GM12878 (cell line): ENCODE measurements at regions of chr1 and their contacts with region 1.

Region 1: DNA sequence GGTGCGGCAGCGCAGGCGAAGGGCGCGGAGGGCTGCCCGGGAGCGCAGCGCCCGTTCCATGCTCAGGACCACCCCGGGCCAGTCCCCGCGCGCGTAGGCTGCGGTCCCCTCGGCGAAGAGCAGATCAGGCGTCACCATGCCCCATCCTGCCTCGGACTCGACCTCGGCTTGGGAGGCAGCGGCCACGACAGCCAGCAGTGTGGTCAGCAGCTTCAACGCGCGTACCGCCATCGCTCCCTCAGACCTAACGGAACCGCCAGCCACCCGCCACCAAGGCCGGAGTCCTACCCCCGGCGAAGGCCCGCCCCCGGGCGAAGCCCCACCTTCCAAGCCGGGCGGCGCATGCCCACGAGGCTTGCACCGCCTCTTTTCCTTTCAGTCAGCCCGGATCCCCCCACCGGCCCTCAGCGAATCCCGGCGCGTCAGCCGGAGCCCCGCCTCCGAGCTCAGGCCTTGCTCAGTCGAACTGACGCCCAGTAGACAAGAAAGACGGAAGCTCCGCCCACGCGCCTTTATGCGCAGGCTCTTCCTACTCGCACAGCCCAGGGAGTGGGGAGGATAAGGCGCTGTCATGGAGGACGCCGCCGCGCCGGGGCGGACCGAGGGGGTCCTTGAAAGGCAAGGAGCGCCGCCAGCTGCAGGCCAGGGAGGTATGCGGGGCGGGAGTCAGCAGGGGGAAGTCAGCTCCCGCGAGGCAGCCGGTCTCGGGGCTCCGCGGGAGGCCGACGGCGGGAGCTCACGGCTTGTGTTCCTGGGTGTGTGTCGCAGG is at the starts of genes C1orf50 and P3H1:
- DNase-seq: peak; percentile 93
- ATAC-seq: peak; percentile 93
- H3K4me3 ChIP-seq: peak within 1 kb of the TSS; percentile 95
- H3K27ac ChIP-seq: peak within 1 kb of the TSS; percentile 84
- H3K4me1 ChIP-seq: peaks cover 4% of the 10 kb centered on the region; the same call in 1 of the 2 replicates
- H3K27me3 ChIP-seq: no peaks in the 10 kb centered on the region
- CTCF ChIP-seq: no peak
- EP300 ChIP-seq: no peak
- POLR2A ChIP-seq: peak; percentile 99
- RAD21 ChIP-seq: no peak
- polyA plus RNA-seq, gene C1orf50: 1.2 to 3.3 TPM
- polyA plus RNA-seq, gene P3H1: 0.72 to 3.1 TPM

Region 2: GRCh38 chr1:42777852-42778251 is 10.9 kb after region 1 on chr1:
- CTCF ChIA-PET with region 1: interaction called, 8 read pairs
- POLR2A ChIA-PET with region 1: interaction called, 9 read pairs
- RAD21 ChIA-PET with region 1: interaction called, 25 read pairs
- SMC1A ChIA-PET with region 1: interaction called, 21 read pairs
- in situ Hi-C with region 1: no loop called
- intact Hi-C with region 1: no loop called
- DNase-seq: no peak
- ATAC-seq: peak; percentile 77
- H3K4me3 ChIP-seq: no peak overlapping the region
- H3K27ac ChIP-seq: no peak overlapping the region
- H3K4me1 ChIP-seq: peaks cover 5% of the 10 kb centered on the region; the same call in 1 of the 2 replicates
- H3K27me3 ChIP-seq: no peaks in the 10 kb centered on the region
- CTCF ChIP-seq: peak; percentile 69 to 76 (median 71)
- EP300 ChIP-seq: no peak
- POLR2A ChIP-seq: no peak
- RAD21 ChIP-seq: peak; percentile 85

Region 3: DNA sequence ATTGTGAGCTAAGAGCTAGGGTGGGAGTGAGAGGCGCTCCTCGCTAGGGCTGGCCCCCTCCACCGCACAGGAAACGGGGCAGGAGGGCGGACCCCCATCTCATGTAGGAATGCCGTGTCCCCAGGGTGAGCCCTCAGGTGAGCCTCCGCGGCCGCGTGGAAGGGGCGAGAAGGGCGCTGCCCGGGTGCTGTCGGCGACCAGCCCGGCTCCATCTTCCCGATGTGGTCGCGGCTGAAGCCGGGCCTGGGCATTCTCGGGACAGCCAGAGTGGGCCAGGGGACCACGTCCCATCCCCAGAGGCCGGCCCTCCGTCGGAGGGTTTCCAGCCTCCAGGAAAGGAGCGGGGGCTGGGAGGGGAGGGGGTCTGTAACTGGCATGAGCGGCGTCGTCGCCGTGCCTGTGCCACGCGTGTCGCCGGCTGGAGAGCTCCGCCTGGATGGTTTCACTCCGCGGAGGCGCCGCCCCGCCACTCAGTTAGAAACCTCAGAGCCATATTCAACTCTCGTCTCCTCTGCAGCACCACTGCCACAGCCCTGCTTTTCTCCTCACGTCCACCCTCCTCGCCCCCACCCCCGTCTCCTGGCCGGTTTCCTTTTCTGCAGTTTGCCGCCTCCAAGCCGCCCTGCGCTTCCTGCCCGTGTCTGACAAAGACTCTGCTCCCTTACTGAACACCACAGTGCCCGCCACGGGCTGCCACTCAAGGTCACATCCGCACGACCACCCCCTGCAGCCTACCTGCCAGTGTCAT is 18.2 kb after region 1 on chr1 and contains the start of gene TMEM269:
- CTCF ChIA-PET with region 1: interaction called, 3 read pairs
- POLR2A ChIA-PET with region 1: interaction called, 12 read pairs
- RAD21 ChIA-PET with region 1: interaction called, 25 read pairs
- SMC1A ChIA-PET with region 1: interaction called, 21 read pairs
- in situ Hi-C with region 1: no loop called
- intact Hi-C with region 1: no loop called
- DNase-seq: no peak
- ATAC-seq: peak; percentile 53; the same call in 2 of the 3 replicates
- H3K4me3 ChIP-seq: no peak within 1 kb of the TSS
- H3K27ac ChIP-seq: no peak within 1 kb of the TSS
- H3K4me1 ChIP-seq: peaks cover 3% of the 10 kb centered on the region; the same call in 1 of the 2 replicates
- H3K27me3 ChIP-seq: no peaks in the 10 kb centered on the region
- CTCF ChIP-seq: no peak
- EP300 ChIP-seq: no peak
- POLR2A ChIP-seq: no peak
- RAD21 ChIP-seq: no peak
- polyA plus RNA-seq, gene TMEM269: 0.02 to 0.06 TPM

Region 4: GRCh38 chr1:42816585-42817434 is 49.9 kb after region 1 on chr1 and contains the starts of genes ERMAP and SVBP:
- CTCF ChIA-PET with region 1: interaction called, 3 read pairs
- POLR2A ChIA-PET with region 1: interaction called, 19 read pairs
- RAD21 ChIA-PET with region 1: interaction called, 20 read pairs
- SMC1A ChIA-PET with region 1: interaction called, 4 read pairs
- in situ Hi-C with region 1: no loop called
- intact Hi-C with region 1: loop called (anchors 2 kb)
- DNase-seq: peak; percentile 43
- ATAC-seq: peak; percentile 95
- H3K4me3 ChIP-seq: peak within 1 kb of the TSS; percentile 84
- H3K27ac ChIP-seq: peak within 1 kb of the TSS; percentile 87
- H3K4me1 ChIP-seq: peaks cover 4% of the 10 kb centered on the region; the same call in 1 of the 2 replicates
- H3K27me3 ChIP-seq: no peaks in the 10 kb centered on the region
- CTCF ChIP-seq: peak in 1 of 3 experiments; percentile 24; a peak in 2 of 6 replicates
- EP300 ChIP-seq: no peak
- POLR2A ChIP-seq: peak; percentile 90
- RAD21 ChIP-seq: no peak
- polyA plus RNA-seq, gene ERMAP: 1.4 to 2.2 TPM
- polyA plus RNA-seq, gene SVBP: 19.8 to 29.5 TPM